WTC11 (cell line): ENCODE measurements at regions of chr15 and their contacts with region 1.

Region 1: GRCh38 chr15:88454867-88455810 is 12.0 kb downstream of the MRPL46 start:
- DNase-seq: peak; percentile 71
- ATAC-seq: peak; percentile 90
- H3K4me3 Mint-ChIP-seq: no peak overlapping the region
- H3K27ac Mint-ChIP-seq: no peak overlapping the region
- H3K4me1 Mint-ChIP-seq: peaks cover 7% of the 10 kb centered on the region
- H3K27me3 Mint-ChIP-seq: peaks cover 3% of the 10 kb centered on the region
- CTCF ChIP-seq: peak; percentile 60

Region 2: GRCh38 chr15:88202231-88202630 is 252.9 kb before region 1 on chr15:
- CTCF ChIA-PET with region 1: no interaction called
- POLR2A ChIA-PET with region 1: no interaction called
- DNase-seq: no peak
- ATAC-seq: no peak
- H3K4me3 Mint-ChIP-seq: no peak overlapping the region
- H3K27ac Mint-ChIP-seq: no peak overlapping the region
- H3K4me1 Mint-ChIP-seq: no peaks in the 10 kb centered on the region
- H3K27me3 Mint-ChIP-seq: no peaks in the 10 kb centered on the region
- CTCF ChIP-seq: no peak

Region 3: DNA sequence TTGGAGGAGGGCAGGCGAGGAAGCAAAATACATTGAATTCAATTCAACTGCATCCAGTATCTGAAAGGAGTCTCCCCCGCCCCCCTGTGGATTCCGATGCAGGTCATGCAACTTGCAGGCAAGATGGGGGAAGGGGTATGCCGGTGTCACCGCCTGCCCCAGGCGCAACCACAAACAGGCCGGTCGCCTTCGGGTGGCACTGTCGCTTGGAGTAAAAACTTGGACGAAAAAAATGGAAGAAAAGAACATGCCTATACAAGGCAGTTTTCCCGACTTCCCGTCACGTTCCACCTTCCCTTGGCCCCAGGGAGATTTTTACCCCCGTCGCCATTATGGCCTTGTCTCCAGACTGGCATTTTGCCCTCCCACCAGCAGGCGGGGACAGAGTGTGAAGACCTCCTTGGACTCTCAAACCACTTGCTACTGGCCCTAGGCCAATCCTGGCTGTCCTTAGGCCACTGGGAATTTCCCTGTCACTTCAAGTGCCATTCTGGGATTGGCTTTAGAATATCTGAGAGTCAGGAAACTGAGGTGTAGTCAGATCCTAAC is 197.0 kb before region 1 on chr15:
- CTCF ChIA-PET with region 1: interaction called, 10 read pairs
- POLR2A ChIA-PET with region 1: no interaction called
- DNase-seq: peak; percentile 79
- ATAC-seq: peak; percentile 62
- H3K4me3 Mint-ChIP-seq: peak overlapping the region; percentile 98
- H3K27ac Mint-ChIP-seq: no peak overlapping the region; the same call in 1 of the 2 replicates
- H3K4me1 Mint-ChIP-seq: peaks cover 10% of the 10 kb centered on the region
- H3K27me3 Mint-ChIP-seq: peaks cover 59% of the 10 kb centered on the region
- CTCF ChIP-seq: peak; percentile 58; the same call in 1 of the 2 replicates

Region 4: GRCh38 chr15:88284318-88284998 is 170.7 kb before region 1 on chr15:
- CTCF ChIA-PET with region 1: interaction called, 12 read pairs
- POLR2A ChIA-PET with region 1: no interaction called
- DNase-seq: no peak
- ATAC-seq: peak; percentile 42
- H3K4me3 Mint-ChIP-seq: no peak overlapping the region
- H3K27ac Mint-ChIP-seq: no peak overlapping the region
- H3K4me1 Mint-ChIP-seq: peaks cover 21% of the 10 kb centered on the region
- H3K27me3 Mint-ChIP-seq: peaks cover 15% of the 10 kb centered on the region; the same call in 1 of the 2 replicates
- CTCF ChIP-seq: no peak

Region 5: GRCh38 chr15:88337993-88338392 is 117.1 kb before region 1 on chr15:
- CTCF ChIA-PET with region 1: interaction called, 11 read pairs
- POLR2A ChIA-PET with region 1: no interaction called
- DNase-seq: no peak
- ATAC-seq: peak; percentile 59; the same call in 1 of the 2 replicates
- H3K4me3 Mint-ChIP-seq: no peak overlapping the region
- H3K27ac Mint-ChIP-seq: no peak overlapping the region
- H3K4me1 Mint-ChIP-seq: no peaks in the 10 kb centered on the region
- H3K27me3 Mint-ChIP-seq: peaks cover 4% of the 10 kb centered on the region; the same call in 1 of the 2 replicates
- CTCF ChIP-seq: no peak

Region 6: GRCh38 chr15:88467073-88467934 is 12.2 kb after region 1 on chr15 and contains the starts of genes MRPL46 and MRPS11:
- CTCF ChIA-PET with region 1: interaction called, 10 read pairs
- POLR2A ChIA-PET with region 1: interaction called, 3 read pairs
- DNase-seq: peak; percentile 87
- ATAC-seq: peak; percentile 86
- H3K4me3 Mint-ChIP-seq: peak within 1 kb of the TSS; percentile 96
- H3K27ac Mint-ChIP-seq: peak within 1 kb of the TSS; percentile 97
- H3K4me1 Mint-ChIP-seq: peaks cover 16% of the 10 kb centered on the region
- H3K27me3 Mint-ChIP-seq: no peaks in the 10 kb centered on the region
- CTCF ChIP-seq: no peak
- total RNA-seq, gene MRPL46: 23.2 to 26.8 TPM (median 24.3 TPM) in 3 replicates
- total RNA-seq, gene MRPS11: 43.5 to 49.1 TPM (median 45.9 TPM) in 3 replicates

Region 7: DNA sequence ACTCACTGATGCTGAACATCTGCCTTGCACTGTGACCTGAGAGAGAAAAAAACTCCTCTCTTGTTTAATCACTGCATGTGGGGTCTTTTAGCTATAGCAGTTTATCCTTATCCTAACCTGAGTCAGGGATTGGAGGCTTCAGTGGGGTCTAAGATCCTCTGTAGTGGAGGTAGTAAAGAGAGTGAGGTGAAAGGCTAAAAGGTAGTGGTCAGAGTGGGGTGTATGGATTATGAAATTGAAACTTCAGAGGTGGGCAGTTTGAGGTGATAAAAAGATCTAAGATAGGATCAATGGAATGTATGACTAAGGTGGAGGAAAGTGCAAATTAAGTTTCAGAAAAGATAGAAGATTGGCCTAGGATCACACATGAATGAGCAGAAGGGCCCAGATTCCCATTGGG is 54.8 kb after region 1 on chr15:
- CTCF ChIA-PET with region 1: no interaction called
- POLR2A ChIA-PET with region 1: no interaction called
- DNase-seq: no peak
- ATAC-seq: no peak
- H3K4me3 Mint-ChIP-seq: no peak overlapping the region
- H3K27ac Mint-ChIP-seq: no peak overlapping the region
- H3K4me1 Mint-ChIP-seq: peaks cover 4% of the 10 kb centered on the region
- H3K27me3 Mint-ChIP-seq: peaks cover 32% of the 10 kb centered on the region
- CTCF ChIP-seq: no peak